Heart right ventricle (tissue), 16 donors: ENCODE measurements at regions of chr4 and their contacts with region 1.

Region 1: GRCh38 chr4:44256414-44256813 is 192.2 kb downstream of the KCTD8 start:
- DNase-seq: no peak
- ATAC-seq: peak in 1 of 8 donors; percentile 46
- H3K4me3 ChIP-seq: no peak overlapping the region
- H3K27ac ChIP-seq: no peak overlapping the region
- H3K4me1 ChIP-seq: no peaks in the 10 kb centered on the region
- H3K27me3 ChIP-seq: no peaks in the 10 kb centered on the region
- CTCF ChIP-seq: no peak

Region 2: DNA sequence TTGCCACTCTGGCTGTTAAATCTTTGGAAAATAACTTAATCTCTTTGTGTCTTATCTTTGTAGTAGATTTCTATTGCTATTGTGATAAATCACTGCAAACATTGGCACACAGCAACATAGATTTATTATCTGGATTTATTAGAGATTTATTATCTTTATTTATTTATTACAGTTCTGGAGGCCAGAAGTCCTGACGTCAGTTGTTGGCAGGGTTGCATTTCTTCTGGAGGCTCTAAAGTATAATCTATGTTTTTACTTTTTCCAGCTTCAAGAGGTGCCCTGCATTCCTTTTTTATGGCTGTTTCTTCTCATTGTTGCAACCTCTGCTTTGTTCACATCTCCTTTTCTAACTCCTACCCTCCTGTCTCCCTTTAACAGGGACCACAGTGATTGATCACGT is 821.1 kb before region 1 on chr4:
- intact Hi-C with region 1: no loop called
- DNase-seq: no peak
- ATAC-seq: no peak
- H3K4me3 ChIP-seq: no peak overlapping the region
- H3K27ac ChIP-seq: no peak overlapping the region
- H3K4me1 ChIP-seq: no peaks in the 10 kb centered on the region
- H3K27me3 ChIP-seq: no peaks in the 10 kb centered on the region
- CTCF ChIP-seq: no peak

Region 3: DNA sequence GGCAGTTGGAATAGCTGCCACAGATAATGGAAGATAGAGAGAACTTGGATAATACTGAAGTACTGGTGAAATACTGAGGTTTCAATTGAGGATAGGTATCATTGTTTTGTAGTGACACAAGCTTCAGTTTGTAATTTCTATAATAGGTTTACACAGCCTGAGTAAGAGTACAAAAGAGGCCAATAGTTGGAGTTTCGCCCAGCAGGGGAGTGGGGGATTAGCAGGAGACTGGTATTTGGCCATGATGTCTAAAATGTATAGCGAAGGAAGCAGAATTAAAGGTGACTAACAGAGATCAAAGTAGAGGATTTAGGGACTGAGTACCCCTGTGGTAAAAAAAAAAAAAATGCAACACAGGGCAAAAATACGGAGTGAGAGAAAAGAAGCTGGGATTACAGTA is 62.7 kb after region 1 on chr4:
- intact Hi-C with region 1: loop called in 1 of 10 experiments (anchors 10 kb)
- DNase-seq: no peak
- ATAC-seq: no peak
- H3K4me3 ChIP-seq: no peak overlapping the region
- H3K27ac ChIP-seq: no peak overlapping the region
- H3K4me1 ChIP-seq: no peaks in the 10 kb centered on the region
- H3K27me3 ChIP-seq: no peaks in the 10 kb centered on the region
- CTCF ChIP-seq: no peak